Gastrocnemius medialis (tissue), 4 donors: ENCODE measurements at regions of chr5 and their contacts with region 1.

Region 1: DNA sequence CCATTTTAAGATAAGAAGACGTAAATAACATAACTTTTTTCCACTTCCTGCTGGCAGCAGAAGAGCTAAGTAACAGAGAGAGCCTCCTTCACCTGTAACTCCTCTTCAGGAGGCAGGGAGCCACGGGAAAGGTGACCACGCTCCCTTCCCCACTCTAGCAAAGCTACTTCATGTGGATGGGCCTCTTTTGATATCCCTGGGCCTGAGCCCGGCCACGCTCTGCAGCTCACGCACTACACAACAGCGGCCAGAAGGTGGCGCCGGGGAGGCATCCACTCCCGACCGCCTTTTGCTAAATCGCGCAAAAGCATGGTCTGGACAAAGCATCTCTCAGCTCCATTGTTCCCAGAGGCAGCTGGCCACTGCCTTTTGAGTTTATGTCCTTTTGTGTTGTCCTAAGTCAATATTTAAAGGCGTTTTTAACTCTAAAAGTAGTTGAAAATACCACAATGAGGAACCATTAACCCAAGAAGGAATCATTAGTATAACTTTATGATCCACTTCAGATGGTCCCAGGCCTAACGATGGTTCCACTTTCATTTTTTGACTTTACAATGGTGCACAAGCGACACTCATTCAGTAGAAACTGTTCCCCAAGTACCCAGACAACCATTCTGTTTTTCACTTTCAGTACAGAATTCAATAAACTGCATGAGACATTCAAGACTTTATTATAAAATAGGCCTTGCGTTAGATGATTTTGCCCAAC is 23.6 kb downstream of the CMBL start:
- DNase-seq: peak; percentile 68 to 79
- ATAC-seq: peak in 1 of 2 donors; percentile 28
- H3K4me3 ChIP-seq: no peak overlapping the region
- H3K27ac ChIP-seq: peak overlapping the region in 3 of 4 donors; percentile 91 to 100 (median 96)
- H3K4me1 ChIP-seq: peaks cover 31 to 32% of the 10 kb centered on the region in 2 donors
- H3K27me3 ChIP-seq: no peaks in the 10 kb centered on the region
- CTCF ChIP-seq: peak; percentile 89 to 98 (median 91)
- POLR2A ChIP-seq: no peak

Region 2: GRCh38 chr5:10331341-10331796 is 47.3 kb after region 1 on chr5:
- in situ Hi-C with region 1: no loop called
- intact Hi-C with region 1: loop called (anchors 2 kb)
- DNase-seq: peak in 1 of 2 donors; percentile 44
- ATAC-seq: no peak
- H3K4me3 ChIP-seq: no peak overlapping the region
- H3K27ac ChIP-seq: peak overlapping the region; percentile 73 to 86 (median 78)
- H3K4me1 ChIP-seq: peaks cover 34% of the 10 kb centered on the region in 2 donors
- H3K27me3 ChIP-seq: no peaks in the 10 kb centered on the region
- CTCF ChIP-seq: no peak
- POLR2A ChIP-seq: no peak

Region 3: GRCh38 chr5:10364186-10364683 is 80.2 kb after region 1 on chr5:
- in situ Hi-C with region 1: loop called in 1 of 4 experiments (anchors 5 kb)
- intact Hi-C with region 1: loop called (anchors 1 kb)
- DNase-seq: no peak
- ATAC-seq: peak; percentile 59 to 66
- H3K4me3 ChIP-seq: no peak overlapping the region
- H3K27ac ChIP-seq: peak overlapping the region; percentile 19 to 77 (median 48)
- H3K4me1 ChIP-seq: peaks cover 72 to 85% of the 10 kb centered on the region in 2 donors
- H3K27me3 ChIP-seq: no peaks in the 10 kb centered on the region
- CTCF ChIP-seq: peak in 3 of 5 experiments; percentile 47 to 54 (median 48)
- POLR2A ChIP-seq: no peak

Region 4: GRCh38 chr5:10424124-10424731 is 140.1 kb after region 1 on chr5:
- in situ Hi-C with region 1: loop called in 1 of 4 experiments (anchors 25 kb)
- intact Hi-C with region 1: loop called (anchors 5 kb)
- DNase-seq: peak in 1 of 2 donors; percentile 39
- ATAC-seq: peak in 1 of 2 donors; percentile 83
- H3K4me3 ChIP-seq: no peak overlapping the region
- H3K27ac ChIP-seq: no peak overlapping the region
- H3K4me1 ChIP-seq: no peaks in the 10 kb centered on the region
- H3K27me3 ChIP-seq: no peaks in the 10 kb centered on the region
- CTCF ChIP-seq: peak in 2 of 5 experiments; percentile 24 to 50
- POLR2A ChIP-seq: no peak

Region 5: DNA sequence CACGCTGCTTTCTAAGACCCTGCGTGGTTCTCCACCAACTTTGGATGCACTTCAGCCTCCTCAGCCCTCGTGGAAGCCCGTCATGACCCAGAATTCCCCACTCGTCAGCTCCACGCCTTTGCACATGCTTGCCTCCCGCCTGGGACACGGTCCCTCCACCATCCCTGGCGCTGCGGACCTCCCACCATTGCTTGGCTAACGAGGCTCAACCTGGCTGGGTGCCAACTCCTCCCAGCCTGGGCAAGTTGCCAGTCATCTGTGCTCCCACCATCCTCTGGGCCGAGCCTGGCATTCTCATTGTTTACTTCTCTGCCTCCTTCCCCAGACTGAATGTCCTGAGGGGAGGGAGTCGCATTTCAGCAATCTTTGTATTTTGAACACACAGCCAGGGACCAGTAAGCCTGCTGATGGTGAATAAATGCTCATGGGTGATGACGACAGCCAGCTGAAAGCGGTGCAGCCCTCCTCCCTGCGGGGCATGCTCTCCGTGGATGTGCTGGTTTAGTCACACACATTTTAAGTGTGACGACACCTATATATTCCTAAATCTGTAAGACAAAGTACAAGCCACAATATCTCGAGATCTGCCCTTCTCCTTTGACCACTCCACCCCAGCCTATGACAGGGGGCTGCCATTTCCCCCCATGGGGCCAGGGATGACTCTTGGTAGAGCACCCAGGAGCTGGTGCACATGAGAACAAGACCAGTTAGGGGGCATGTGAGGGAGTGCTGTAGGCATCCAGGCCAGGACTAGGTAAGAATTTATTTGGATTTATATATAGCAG is 317.4 kb after region 1 on chr5:
- in situ Hi-C with region 1: loop called in 1 of 4 experiments (anchors 25 kb)
- intact Hi-C with region 1: loop called (anchors 2 kb)
- DNase-seq: peak; percentile 85 to 86
- ATAC-seq: peak; percentile 84
- H3K4me3 ChIP-seq: peak overlapping the region; percentile 8 to 46 (median 26)
- H3K27ac ChIP-seq: peak overlapping the region; percentile 80 to 92 (median 86)
- H3K4me1 ChIP-seq: peaks cover 34 to 37% of the 10 kb centered on the region in 2 donors
- H3K27me3 ChIP-seq: no peaks in the 10 kb centered on the region
- CTCF ChIP-seq: no peak
- POLR2A ChIP-seq: peak in 1 of 2 donors; percentile 43

Region 6: GRCh38 chr5:10635257-10635866 is 351.3 kb after region 1 on chr5:
- in situ Hi-C with region 1: loop called in 2 of 4 experiments (anchors 25 kb)
- intact Hi-C with region 1: no loop called
- DNase-seq: no peak
- ATAC-seq: no peak
- H3K4me3 ChIP-seq: no peak overlapping the region
- H3K27ac ChIP-seq: no peak overlapping the region
- H3K4me1 ChIP-seq: no peaks in the 10 kb centered on the region
- H3K27me3 ChIP-seq: no peaks in the 10 kb centered on the region
- CTCF ChIP-seq: no peak
- POLR2A ChIP-seq: no peak